ENCODE measurements at regions of chr15 and their contacts with region 1.

Region 1: GRCh38 chr15:45653702-45654424 is 19.0 kb downstream of the SQOR start:
- DNase-seq: no peak
- H3K4me3 Mint-ChIP-seq: no peak overlapping the region
- H3K27ac Mint-ChIP-seq: peak overlapping the region; percentile 1
- H3K4me1 Mint-ChIP-seq: peaks cover 11% of the 10 kb centered on the region
- H3K27me3 Mint-ChIP-seq: no peaks in the 10 kb centered on the region
- CTCF ChIP-seq: no peak

Region 2: GRCh38 chr15:45641374-45641781 is 12.5 kb before region 1 on chr15:
- CTCF ChIA-PET with region 1: interaction called, 4 read pairs
- POLR2A ChIA-PET with region 1: interaction called, 48 read pairs
- intact Hi-C with region 1: no loop called
- DNase-seq: peak; percentile 97
- H3K4me3 Mint-ChIP-seq: peak overlapping the region; percentile 52
- H3K27ac Mint-ChIP-seq: peak overlapping the region; percentile 91
- H3K4me1 Mint-ChIP-seq: peaks cover 65% of the 10 kb centered on the region
- H3K27me3 Mint-ChIP-seq: no peaks in the 10 kb centered on the region
- CTCF ChIP-seq: peak; percentile 7

Measured in MCF 10A (cell line).